Mucosa of descending colon (tissue), 3 donors: ENCODE measurements at regions of chr2 and their contacts with region 1.

Region 1: GRCh38 chr2:224357098-224357901 is 44.6 kb downstream of the FAM124B start:
- DNase-seq: peak in 1 of 3 donors; percentile 81
- ATAC-seq: peak; percentile 85
- H3K4me3 ChIP-seq: no peak overlapping the region
- H3K4me1 ChIP-seq: no peaks in the 10 kb centered on the region
- CTCF ChIP-seq: peak; percentile 39

Region 2: GRCh38 chr2:224650815-224651439 is 293.6 kb after region 1 on chr2:
- intact Hi-C with region 1: loop called (anchors 2 to 5 kb)
- DNase-seq: peak in 1 of 3 donors; percentile 60
- ATAC-seq: peak; percentile 63
- H3K4me3 ChIP-seq: no peak overlapping the region
- H3K4me1 ChIP-seq: peaks cover 3% of the 10 kb centered on the region
- CTCF ChIP-seq: peak; percentile 44